Activated T-helper 1 cell treated with anti-CD3 and anti-CD28 coated beads, Interleukin-12 subunit alpha, Interleukin-12 subunit beta, Interleukin-2, Interleukin-4 antibody, amounts not matched to agents 30 ng/mL and 10 ng/mL and 1 ng/mL, durations not matched to agents 14 hours and 24 hours and 36 hours (primary cell): ENCODE measurements at regions of chr2 and their contacts with region 1.

Region 1: GRCh38 chr2:227125506-227125905 is 38.5 kb downstream of the COL4A4 start:
- DNase-seq: no peak
- H3K4me3 Mint-ChIP-seq: no peak overlapping the region
- H3K27ac Mint-ChIP-seq: no peak overlapping the region
- H3K4me1 Mint-ChIP-seq: no peaks in the 10 kb centered on the region
- H3K27me3 Mint-ChIP-seq: peaks cover 8% of the 10 kb centered on the region

Region 2: GRCh38 chr2:227238238-227239237 is 113.0 kb after region 1 on chr2:
- intact Hi-C with region 1: loop called (anchors 1 kb)
- DNase-seq: peak; percentile 13
- H3K4me3 Mint-ChIP-seq: no peak overlapping the region
- H3K27ac Mint-ChIP-seq: no peak overlapping the region
- H3K4me1 Mint-ChIP-seq: no peaks in the 10 kb centered on the region
- H3K27me3 Mint-ChIP-seq: peaks cover 4% of the 10 kb centered on the region